Heart left ventricle (tissue), 16 donors: ENCODE measurements at regions of chr17 and their contacts with region 1.

Region 1: DNA sequence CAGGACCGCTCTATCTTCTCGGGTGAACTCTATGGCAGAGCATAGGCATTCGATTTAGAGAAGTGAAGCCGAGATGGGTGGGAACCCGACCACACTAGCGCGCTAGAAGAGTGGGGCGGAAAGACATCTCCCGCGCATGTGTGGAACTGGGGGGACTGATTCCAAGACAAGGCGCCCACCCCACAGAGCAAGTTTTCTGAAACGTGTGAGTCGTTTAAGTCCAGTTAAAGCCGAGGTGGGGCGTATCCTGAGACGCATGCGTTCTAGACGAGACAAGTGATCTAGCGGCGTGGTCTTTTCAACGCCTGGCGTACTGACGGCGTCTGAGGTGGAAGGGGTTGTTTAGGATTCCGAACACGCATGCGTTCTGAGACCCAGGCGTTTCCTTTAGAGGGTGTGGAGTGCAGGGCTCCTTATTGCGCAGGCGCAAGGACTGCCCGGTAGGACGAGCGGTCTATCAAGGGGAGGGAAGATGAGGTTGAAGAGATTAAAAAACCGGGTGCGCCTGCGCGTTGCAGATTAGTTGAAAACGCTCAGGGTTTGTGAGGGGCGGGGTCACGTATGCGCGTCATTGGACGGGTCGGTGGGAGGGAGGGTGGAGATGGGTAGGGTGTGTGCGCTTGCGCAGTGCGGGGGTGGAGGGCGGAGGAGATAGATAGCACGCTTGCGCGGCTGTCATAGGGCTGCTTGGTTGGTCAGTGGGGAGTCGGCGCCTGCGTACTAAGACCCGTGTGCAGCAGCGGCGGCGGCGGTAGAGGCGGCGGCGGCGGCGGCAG is at the start of gene EIF5A:
- DNase-seq: peak; percentile 100
- ATAC-seq: peak; percentile 91 to 97 (median 95)
- H3K4me3 ChIP-seq: peak within 1 kb of the TSS; percentile 69 to 98 (median 92)
- H3K27ac ChIP-seq: peak within 1 kb of the TSS; percentile 85 to 100 (median 97)
- H3K4me1 ChIP-seq: peaks cover 4 to 39% (median 28%) of the 10 kb centered on the region in 12 donors
- H3K27me3 ChIP-seq: no peaks in the 10 kb centered on the region
- CTCF ChIP-seq: no peak
- POLR2A ChIP-seq: peak in 1 of 2 donors; percentile 78
- total RNA-seq, gene EIF5A: 120 to 500 (median 257) TPM

Region 2: DNA sequence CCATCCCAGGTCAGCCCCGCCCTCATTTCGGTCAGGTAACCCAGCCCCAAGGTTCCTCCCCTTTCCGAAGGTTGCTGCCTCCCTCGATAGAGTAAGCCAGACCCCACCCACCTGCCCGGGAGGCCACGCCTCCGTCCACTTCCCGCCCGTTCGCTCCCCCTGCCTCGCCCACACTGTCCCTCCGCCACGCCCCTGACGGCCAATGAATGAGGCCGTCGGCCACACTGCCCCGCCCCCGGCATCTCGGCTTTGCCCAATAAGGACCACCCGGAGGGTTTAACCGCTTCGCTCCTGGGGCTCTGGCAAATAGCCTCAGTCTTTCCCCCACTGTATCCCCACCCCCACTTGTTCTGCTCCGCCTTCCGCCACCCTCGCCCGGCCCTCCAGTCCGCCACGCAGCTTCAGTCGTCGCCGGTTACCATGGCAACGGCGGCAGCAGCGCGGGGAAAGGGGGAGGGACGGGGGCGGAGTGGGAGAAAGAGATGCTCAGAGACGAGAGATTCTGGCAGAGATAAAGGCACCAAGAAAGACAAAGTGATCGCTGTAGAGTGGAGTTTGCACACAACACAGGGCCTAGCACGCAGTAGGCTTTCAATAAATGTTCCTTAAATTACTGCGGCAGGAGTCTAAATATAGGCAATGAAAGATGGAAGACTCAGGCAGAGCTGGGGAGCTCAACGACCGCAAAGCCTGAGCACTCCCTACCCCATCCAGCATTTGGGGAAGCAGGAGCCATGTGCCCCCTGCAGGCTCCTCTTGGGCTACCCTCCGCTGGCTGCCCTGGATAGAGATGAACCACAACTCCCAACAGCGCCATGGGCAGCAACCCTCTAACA is 92.6 kb before region 1 on chr17:
- intact Hi-C with region 1: loop called in 1 of 10 experiments (anchors 5 kb)
- DNase-seq: peak; percentile 98 to 100 (median 99)
- ATAC-seq: peak; percentile 89 to 92 (median 90)
- H3K4me3 ChIP-seq: peak overlapping the region; percentile 19 to 77 (median 64)
- H3K27ac ChIP-seq: peak overlapping the region in 11 of 12 donors; percentile 44 to 99 (median 70)
- H3K4me1 ChIP-seq: peaks cover 0 to 67% (median 45%) of the 10 kb centered on the region in 12 donors
- H3K27me3 ChIP-seq: no peaks in the 10 kb centered on the region
- CTCF ChIP-seq: peak; percentile 24 to 72 (median 48)
- POLR2A ChIP-seq: no peak

Region 3: GRCh38 chr17:7252176-7253043 is 54.7 kb before region 1 on chr17 and contains the start of gene ELP5:
- intact Hi-C with region 1: loop called in 4 of 10 experiments (anchors 2 to 5 kb)
- DNase-seq: peak; percentile 95 to 98 (median 96)
- ATAC-seq: peak; percentile 72 to 86 (median 82)
- H3K4me3 ChIP-seq: peak within 1 kb of the TSS; percentile 57 to 100 (median 94)
- H3K27ac ChIP-seq: peak within 1 kb of the TSS; percentile 96 to 100 (median 99)
- H3K4me1 ChIP-seq: peaks cover 8 to 46% (median 37%) of the 10 kb centered on the region in 12 donors
- H3K27me3 ChIP-seq: no peaks in the 10 kb centered on the region
- CTCF ChIP-seq: peak in 8 of 12 donors; percentile 26 to 58 (median 40)
- POLR2A ChIP-seq: peak in 1 of 2 donors; percentile 42
- total RNA-seq, gene ELP5: 28.0 to 87.2 (median 52.6) TPM

Region 4: GRCh38 chr17:7266784-7267183 is 40.3 kb before region 1 on chr17:
- intact Hi-C with region 1: no loop called
- DNase-seq: no peak
- ATAC-seq: no peak
- H3K4me3 ChIP-seq: no peak overlapping the region
- H3K27ac ChIP-seq: no peak overlapping the region
- H3K4me1 ChIP-seq: peaks cover 0 to 20% (median 13%) of the 10 kb centered on the region in 12 donors
- H3K27me3 ChIP-seq: peaks cover 12 to 48% (median 26%) of the 10 kb centered on the region in 9 donors
- CTCF ChIP-seq: no peak
- POLR2A ChIP-seq: no peak

Region 5: DNA sequence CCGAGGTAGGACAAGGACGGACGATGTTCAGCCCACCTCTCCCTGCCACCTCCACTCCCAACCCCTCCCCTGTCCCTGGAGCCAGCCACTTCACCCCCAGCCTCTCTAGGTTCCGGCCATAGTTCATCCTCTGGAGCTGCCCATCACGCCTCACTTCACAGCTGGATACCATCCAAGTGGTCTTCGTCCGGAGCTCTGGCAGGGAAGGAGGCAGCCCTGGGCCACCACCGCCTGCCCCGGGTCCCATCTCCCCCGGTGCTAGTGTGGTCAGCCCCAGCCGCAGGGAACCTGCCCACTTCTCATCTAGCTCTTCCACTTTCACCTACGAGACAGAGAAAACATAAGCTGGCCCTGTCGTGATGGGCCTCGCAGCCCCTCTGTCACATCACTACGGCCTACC is 14.4 kb after region 1 on chr17:
- intact Hi-C with region 1: loop called in 1 of 10 experiments (anchors 1 kb)
- DNase-seq: no peak
- ATAC-seq: no peak
- H3K4me3 ChIP-seq: no peak overlapping the region
- H3K27ac ChIP-seq: no peak overlapping the region
- H3K4me1 ChIP-seq: peaks cover 0 to 8% (median 0%) of the 10 kb centered on the region in 12 donors
- H3K27me3 ChIP-seq: no peaks in the 10 kb centered on the region
- CTCF ChIP-seq: no peak
- POLR2A ChIP-seq: no peak

Region 6: GRCh38 chr17:7336240-7337175 is 29.4 kb after region 1 on chr17 and contains the start of gene ACAP1:
- intact Hi-C with region 1: no loop called
- DNase-seq: peak in 1 of 5 donors; percentile 84
- ATAC-seq: peak in 3 of 4 donors; percentile 23 to 67 (median 57)
- H3K4me3 ChIP-seq: peak within 1 kb of the TSS in 5 of 12 donors; percentile 9 to 63 (median 12)
- H3K27ac ChIP-seq: peak within 1 kb of the TSS in 1 of 12 donors; percentile 82
- H3K4me1 ChIP-seq: peaks cover 0 to 31% (median 0%) of the 10 kb centered on the region in 12 donors
- H3K27me3 ChIP-seq: peaks cover 0 to 59% (median 5%) of the 10 kb centered on the region in 9 donors
- CTCF ChIP-seq: no peak
- POLR2A ChIP-seq: no peak
- total RNA-seq, gene ACAP1: 0.88 to 24.2 (median 16.4) TPM

Region 7: DNA sequence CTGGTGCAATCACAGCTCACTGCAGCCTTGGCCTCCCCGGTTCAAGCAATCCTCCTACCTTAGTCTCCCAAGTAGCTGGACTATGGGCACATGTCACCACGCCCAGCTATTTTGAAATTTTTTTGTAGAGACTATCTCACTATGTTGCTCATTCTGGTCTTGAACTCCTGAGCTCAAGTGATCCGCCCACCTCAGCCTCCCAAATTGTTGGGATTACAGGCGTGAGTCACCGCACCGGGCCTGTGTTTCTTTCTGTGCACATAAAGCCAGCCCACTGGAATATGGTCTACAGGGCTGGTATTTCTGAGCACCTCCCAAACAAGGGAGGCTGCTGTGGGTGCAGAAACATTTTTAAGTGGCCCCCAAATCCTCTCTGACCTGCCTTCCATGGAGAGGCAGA is 56.2 kb after region 1 on chr17:
- intact Hi-C with region 1: no loop called
- DNase-seq: no peak
- ATAC-seq: no peak
- H3K4me3 ChIP-seq: no peak overlapping the region
- H3K27ac ChIP-seq: no peak overlapping the region
- H3K4me1 ChIP-seq: no peaks in the 10 kb centered on the region
- H3K27me3 ChIP-seq: no peaks in the 10 kb centered on the region
- CTCF ChIP-seq: no peak
- POLR2A ChIP-seq: no peak

Region 8: DNA sequence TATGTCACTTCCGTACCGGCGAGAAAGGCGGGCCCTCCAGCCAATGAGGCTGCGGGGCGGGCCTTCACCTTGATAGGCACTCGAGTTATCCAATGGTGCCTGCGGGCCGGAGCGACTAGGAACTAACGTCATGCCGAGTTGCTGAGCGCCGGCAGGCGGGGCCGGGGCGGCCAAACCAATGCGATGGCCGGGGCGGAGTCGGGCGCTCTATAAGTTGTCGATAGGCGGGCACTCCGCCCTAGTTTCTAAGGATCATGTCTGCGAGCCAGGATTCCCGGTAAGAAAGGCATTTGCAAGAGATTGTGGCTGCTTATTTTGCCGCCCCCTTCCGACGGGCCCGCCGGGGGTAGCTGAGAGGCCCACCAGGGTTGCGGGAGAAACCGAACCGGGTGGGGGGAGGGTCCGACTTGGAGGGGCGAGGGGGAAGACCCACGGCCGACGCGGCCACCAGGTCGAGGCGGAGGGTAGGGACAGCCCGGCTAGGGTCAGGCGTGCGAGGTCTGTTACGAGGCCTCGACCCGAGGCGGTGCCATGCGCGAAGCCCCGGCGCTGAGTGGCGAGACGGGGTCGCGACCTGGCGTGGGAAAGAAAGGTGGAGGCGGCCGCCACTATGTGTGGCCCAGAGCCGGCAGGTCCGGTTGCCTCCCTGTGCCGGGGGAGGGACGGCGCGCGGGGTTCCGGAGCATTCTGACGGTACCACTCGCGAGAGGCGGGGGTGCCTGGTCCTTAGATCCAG is 265.7 kb after region 1 on chr17:
- intact Hi-C with region 1: loop called in 1 of 10 experiments (anchors 5 kb)
- DNase-seq: peak; percentile 99 to 100 (median 99)
- ATAC-seq: peak; percentile 92 to 96 (median 96)
- H3K4me3 ChIP-seq: peak overlapping the region; percentile 77 to 100 (median 100)
- H3K27ac ChIP-seq: peak overlapping the region; percentile 80 to 100 (median 98)
- H3K4me1 ChIP-seq: peaks cover 4 to 50% (median 32%) of the 10 kb centered on the region in 12 donors
- H3K27me3 ChIP-seq: no peaks in the 10 kb centered on the region
- CTCF ChIP-seq: no peak
- POLR2A ChIP-seq: peak; percentile 95 to 99